PC-9 (cell line): ENCODE measurements at regions of chr16 and their contacts with region 1.

Region 1: DNA sequence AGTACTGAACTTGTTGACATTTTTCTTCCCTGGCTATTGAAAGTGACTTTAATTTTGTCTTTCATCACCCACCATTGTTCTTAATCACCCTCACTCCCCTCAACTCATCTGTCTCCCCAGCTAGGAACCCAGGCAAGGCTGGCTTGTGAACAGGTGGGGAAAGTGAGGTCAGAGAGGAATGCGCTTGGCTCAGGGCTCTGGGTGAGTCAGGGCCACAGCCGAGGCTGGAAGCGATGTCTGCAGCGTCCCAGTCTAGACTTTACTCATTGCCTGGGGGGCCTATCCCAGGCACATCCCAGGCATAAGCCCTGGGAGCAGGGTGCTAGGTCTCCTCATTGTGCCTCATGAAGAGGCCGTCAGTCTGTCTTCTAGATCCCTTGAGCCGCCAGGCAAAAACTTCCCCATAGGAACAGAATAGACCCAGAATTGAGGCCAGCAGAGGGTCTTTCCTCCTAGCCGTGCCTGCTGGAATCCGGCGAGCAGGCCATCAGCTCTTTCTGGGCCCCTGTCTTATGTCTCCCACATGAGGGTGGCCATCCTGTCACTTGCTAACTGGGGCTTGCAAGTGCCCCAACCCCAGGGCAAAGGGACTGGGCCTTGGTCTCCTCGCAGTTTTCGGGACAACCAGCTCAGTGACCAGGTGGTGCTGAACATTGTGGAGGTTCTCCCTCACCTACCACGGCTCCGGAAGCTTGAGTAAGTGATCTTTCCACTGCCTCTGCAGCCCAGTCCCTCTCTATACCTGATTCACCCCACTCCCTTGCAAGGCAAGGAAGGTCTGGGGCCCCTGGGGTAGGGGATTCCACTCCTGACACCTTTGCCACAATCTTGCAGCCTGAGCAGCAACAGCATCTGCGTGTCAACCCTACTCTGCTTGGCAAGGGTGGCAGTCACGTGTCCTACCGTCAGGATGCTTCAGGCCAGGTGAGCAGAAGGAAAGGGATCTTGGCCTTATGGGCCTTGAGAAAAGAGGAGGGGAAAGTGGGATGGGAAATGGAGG is 40.1 kb downstream of the NLRC5 start:
- DNase-seq: peak in 1 of 2 experiments; percentile 10
- H3K4me3 ChIP-seq: no peak overlapping the region
- H3K27ac ChIP-seq: no peak overlapping the region
- H3K4me1 ChIP-seq: peaks cover 11% of the 10 kb centered on the region
- H3K27me3 ChIP-seq: no peaks in the 10 kb centered on the region
- CTCF ChIP-seq: no peak

Region 2: GRCh38 chr16:56767024-56767423 is 262.4 kb before region 1 on chr16:
- CTCF ChIA-PET with region 1: no interaction called
- POLR2A ChIA-PET with region 1: no interaction called
- intact Hi-C with region 1: no loop called
- DNase-seq: no peak
- H3K4me3 ChIP-seq: no peak overlapping the region
- H3K27ac ChIP-seq: no peak overlapping the region
- H3K4me1 ChIP-seq: no peaks in the 10 kb centered on the region
- H3K27me3 ChIP-seq: no peaks in the 10 kb centered on the region
- CTCF ChIP-seq: no peak

Region 3: GRCh38 chr16:56795011-56795410 is 234.4 kb before region 1 on chr16:
- CTCF ChIA-PET with region 1: interaction called, 14 read pairs
- POLR2A ChIA-PET with region 1: no interaction called
- intact Hi-C with region 1: no loop called
- DNase-seq: no peak
- H3K4me3 ChIP-seq: no peak overlapping the region
- H3K27ac ChIP-seq: no peak overlapping the region
- H3K4me1 ChIP-seq: no peaks in the 10 kb centered on the region
- H3K27me3 ChIP-seq: no peaks in the 10 kb centered on the region
- CTCF ChIP-seq: no peak

Region 4: GRCh38 chr16:57061084-57061905 is 31.8 kb after region 1 on chr16:
- CTCF ChIA-PET with region 1: no interaction called
- POLR2A ChIA-PET with region 1: no interaction called
- intact Hi-C with region 1: loop called (anchors 2 kb)
- DNase-seq: peak; percentile 54 to 84
- H3K4me3 ChIP-seq: no peak overlapping the region
- H3K27ac ChIP-seq: no peak overlapping the region; the same call in 1 of the 2 replicates
- H3K4me1 ChIP-seq: peaks cover 18% of the 10 kb centered on the region
- H3K27me3 ChIP-seq: no peaks in the 10 kb centered on the region
- CTCF ChIP-seq: no peak

Region 5: DNA sequence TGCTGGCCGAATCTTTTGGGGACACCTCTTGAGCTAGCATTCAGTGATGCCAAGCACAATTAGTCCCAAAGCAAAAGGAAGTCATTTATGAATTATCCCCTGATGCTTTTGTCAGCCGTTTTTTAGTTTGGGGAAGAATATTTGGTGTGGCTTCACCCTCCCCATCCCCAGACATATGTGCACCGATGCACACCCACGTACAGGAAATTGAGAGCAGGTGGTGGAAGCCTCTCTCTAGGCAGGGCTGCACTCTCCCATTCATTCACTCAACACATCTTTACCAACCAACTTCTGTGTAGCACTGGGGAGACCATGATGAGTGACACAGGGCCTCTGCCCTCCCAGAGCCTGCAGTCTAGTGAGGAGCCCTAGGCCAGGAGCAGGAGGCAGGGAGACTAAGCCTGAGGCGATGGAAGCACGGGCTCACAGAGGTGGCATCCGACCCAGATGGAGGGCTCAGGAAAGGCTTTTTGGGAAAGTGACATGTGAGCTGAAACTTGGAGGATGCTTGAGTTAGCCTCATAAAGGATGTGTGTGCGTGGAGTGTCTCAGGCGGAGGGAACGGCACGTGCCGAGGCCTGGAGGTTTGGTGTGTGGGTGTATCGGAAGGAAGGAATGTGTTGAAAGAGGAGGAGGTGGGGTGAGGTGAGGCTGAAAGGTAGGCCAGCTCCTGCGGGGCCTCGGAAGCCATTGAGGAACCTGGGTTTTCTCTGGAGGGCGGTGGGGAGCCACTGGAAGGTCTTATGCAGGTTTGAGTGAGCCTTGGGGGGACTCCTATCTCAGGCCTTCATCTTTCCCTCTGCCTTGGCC is 112.6 kb after region 1 on chr16:
- CTCF ChIA-PET with region 1: no interaction called
- POLR2A ChIA-PET with region 1: no interaction called
- intact Hi-C with region 1: no loop called
- DNase-seq: no peak
- H3K4me3 ChIP-seq: no peak overlapping the region
- H3K27ac ChIP-seq: no peak overlapping the region
- H3K4me1 ChIP-seq: 0 out of 2 replicates have a peak, but pooled peaks cover 4% of the 10 kb centered on the region
- H3K27me3 ChIP-seq: no peaks in the 10 kb centered on the region
- CTCF ChIP-seq: no peak